Stomach (tissue), 19 donors: ENCODE measurements at regions of chr18 and their contacts with region 1.

Region 1: GRCh38 chr18:4106407-4107033 is 348.6 kb downstream of the DLGAP1 start:
- DNase-seq: peak; percentile 69 to 88
- H3K4me3 ChIP-seq: peak overlapping the region in 2 of 4 donors; percentile 15 to 21
- H3K27ac ChIP-seq: no peak overlapping the region
- H3K4me1 ChIP-seq: peaks cover 0 to 7% (median 0%) of the 10 kb centered on the region in 4 donors
- H3K27me3 ChIP-seq: no peaks in the 10 kb centered on the region
- CTCF ChIP-seq: peak in 5 of 7 experiments; percentile 40 to 84 (median 72)
- EP300 ChIP-seq: no peak
- POLR2A ChIP-seq: no peak

Region 2: DNA sequence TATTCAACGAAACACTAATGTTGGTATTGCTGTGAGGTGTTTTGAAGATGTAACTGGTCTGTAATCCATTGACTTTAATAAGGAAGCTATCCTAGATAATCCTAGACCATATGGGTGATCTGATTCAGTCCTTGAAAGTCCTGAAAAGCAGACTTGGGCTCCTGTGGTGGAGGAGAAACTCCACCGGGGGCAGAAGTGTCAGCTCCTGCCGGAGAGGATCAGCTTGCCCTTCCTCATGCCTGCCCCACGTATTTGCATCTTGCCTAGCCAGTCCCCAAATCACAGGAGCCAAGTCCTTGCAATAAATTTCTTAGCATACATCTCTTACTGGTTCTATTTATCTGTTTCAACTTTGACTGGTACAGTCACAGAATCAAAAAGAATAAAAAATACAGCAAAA is 492.8 kb after region 1 on chr18:
- intact Hi-C with region 1: no loop called
- DNase-seq: no peak
- H3K4me3 ChIP-seq: no peak overlapping the region
- H3K27ac ChIP-seq: no peak overlapping the region
- H3K4me1 ChIP-seq: no peaks in the 10 kb centered on the region
- H3K27me3 ChIP-seq: no peaks in the 10 kb centered on the region
- CTCF ChIP-seq: no peak
- EP300 ChIP-seq: no peak
- POLR2A ChIP-seq: no peak

Region 3: GRCh38 chr18:5057386-5058348 is 951.1 kb after region 1 on chr18:
- intact Hi-C with region 1: loop called (anchors 5 kb)
- DNase-seq: peak; percentile 57 to 81
- H3K4me3 ChIP-seq: no peak overlapping the region
- H3K27ac ChIP-seq: no peak overlapping the region
- H3K4me1 ChIP-seq: no peaks in the 10 kb centered on the region
- H3K27me3 ChIP-seq: no peaks in the 10 kb centered on the region
- CTCF ChIP-seq: peak in 5 of 7 experiments; percentile 44 to 70 (median 53)
- EP300 ChIP-seq: no peak
- POLR2A ChIP-seq: no peak